CD4-positive, alpha-beta T cell (primary cell): ENCODE measurements at regions of chr6 and their contacts with region 1.

Region 1: DNA sequence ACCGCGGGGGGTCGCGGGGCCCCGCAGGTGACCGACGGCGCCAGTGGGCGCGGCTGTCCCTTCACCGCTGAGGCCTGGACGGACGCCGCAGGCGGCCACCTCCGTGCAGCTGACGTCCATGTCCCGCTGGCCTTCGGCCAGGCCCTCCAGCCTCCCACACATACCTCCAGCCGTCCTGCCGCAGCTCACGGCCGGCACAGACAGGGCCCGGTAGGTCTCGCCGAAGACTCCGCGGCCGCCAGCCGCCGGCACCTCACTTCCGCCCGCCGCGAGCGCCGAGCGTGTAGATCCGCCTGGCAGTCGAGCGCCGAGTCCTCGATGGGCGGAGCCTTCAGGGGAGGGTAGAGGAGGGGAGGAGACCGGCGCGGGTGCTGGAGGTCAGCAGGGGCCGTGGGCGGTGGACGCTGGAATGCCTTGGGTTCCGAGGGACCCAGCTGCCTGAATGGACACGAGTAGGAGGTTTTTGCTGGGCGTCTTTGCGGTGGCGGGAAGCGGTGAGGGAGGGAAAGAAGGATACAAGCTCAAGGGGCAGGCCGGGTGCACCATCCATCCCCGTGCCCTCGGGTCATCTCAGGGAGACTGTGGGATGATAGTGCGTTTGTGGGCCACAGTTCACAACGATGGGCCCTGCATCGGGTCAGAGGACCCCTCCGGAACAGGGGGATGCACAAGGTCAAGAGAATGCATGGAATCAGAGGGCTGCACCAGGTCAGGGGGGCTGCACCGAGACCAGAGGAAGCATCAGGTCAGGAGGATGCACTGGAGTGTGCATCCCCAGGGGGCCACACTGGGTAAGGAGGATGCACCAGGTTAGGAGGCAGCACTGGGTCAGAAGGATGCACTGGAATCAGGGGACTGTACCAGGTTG is at the start of gene EXOC2:
- DNase-seq: peak; percentile 66 to 90 (median 78)
- ATAC-seq: peak; percentile 77
- H3K4me3 ChIP-seq: peak within 1 kb of the TSS; percentile 78
- H3K4me3 Mint-ChIP-seq: peak within 1 kb of the TSS; percentile 97
- H3K27ac ChIP-seq: peak within 1 kb of the TSS; percentile 81 to 87
- H3K27ac Mint-ChIP-seq: peak within 1 kb of the TSS; percentile 96
- H3K4me1 ChIP-seq: peaks cover 29% of the 10 kb centered on the region
- H3K4me1 Mint-ChIP-seq: peaks cover 24% of the 10 kb centered on the region
- H3K27me3 ChIP-seq: no peaks in the 10 kb centered on the region
- H3K27me3 Mint-ChIP-seq: no peaks in the 10 kb centered on the region
- CTCF ChIP-seq: no peak
- total RNA-seq, gene EXOC2: 16.7 to 18.8 TPM

Region 2: DNA sequence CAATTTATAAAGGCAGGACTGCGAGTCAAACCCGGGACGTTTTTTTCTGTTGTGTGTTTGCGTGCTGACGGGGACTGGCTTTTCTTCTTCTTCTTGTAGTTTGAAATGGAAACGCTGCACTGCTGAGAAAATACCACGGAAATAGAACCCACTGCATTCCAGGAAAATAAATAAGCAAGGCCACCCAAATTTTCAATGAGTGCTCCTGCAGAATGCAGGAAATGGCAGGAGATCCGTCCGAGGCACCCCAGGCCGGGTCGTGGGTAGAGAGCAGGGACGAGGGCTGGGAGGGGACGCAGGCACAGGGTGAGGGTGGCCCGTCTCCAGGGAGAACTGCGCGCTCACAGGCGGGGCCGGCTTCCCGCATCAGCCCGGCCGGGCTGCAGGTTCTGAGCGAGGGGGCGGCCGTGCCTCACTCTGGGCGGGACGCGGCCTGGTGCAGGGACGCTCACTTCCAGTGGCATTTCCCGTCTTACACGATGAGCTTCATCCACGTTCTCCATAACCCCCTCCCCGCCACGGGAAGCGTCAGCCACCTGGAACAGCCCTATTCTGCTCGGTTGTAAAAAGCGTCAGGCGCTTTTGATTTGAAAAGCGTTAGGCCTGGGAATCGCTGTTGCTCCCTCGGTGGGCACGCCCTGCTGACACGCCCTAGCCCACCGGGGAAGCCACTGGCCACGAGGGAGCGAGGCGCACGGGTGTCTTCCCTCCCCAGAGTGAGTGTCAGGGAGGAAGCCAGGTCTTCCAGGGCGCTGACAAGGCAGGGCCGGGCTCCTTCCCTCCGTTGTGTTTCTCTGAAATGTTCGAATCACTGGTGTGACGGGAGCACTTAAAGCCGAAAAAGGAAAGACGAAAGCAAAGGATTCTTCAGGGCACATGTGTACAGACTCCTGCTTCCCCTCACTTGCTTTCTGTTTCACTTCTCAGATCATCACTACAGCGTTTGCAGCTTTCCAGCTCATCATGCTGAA is 17.8 kb after region 1 on chr6:
- CTCF ChIA-PET with region 1: no interaction called
- POLR2A ChIA-PET with region 1: interaction called, 27 read pairs
- intact Hi-C with region 1: loop called (anchors 2 kb)
- DNase-seq: peak; percentile 10 to 81 (median 32)
- ATAC-seq: peak; percentile 91
- H3K4me3 ChIP-seq: peak overlapping the region; percentile 75
- H3K4me3 Mint-ChIP-seq: peak overlapping the region; percentile 97
- H3K27ac ChIP-seq: peak overlapping the region; percentile 68 to 88
- H3K27ac Mint-ChIP-seq: peak overlapping the region; percentile 86
- H3K4me1 ChIP-seq: peaks cover 11% of the 10 kb centered on the region
- H3K4me1 Mint-ChIP-seq: peaks cover 20% of the 10 kb centered on the region
- H3K27me3 ChIP-seq: no peaks in the 10 kb centered on the region
- H3K27me3 Mint-ChIP-seq: peaks cover 6% of the 10 kb centered on the region
- CTCF ChIP-seq: no peak

Region 3: GRCh38 chr6:2245094-2245876 is 1552.2 kb after region 1 on chr6 and contains the start of gene GMDS:
- CTCF ChIA-PET with region 1: no interaction called
- POLR2A ChIA-PET with region 1: no interaction called
- intact Hi-C with region 1: loop called in 1 of 2 experiments (anchors 5 kb)
- DNase-seq: peak; percentile 60 to 95 (median 78)
- ATAC-seq: peak; percentile 88
- H3K4me3 ChIP-seq: peak within 1 kb of the TSS; percentile 97
- H3K4me3 Mint-ChIP-seq: peak within 1 kb of the TSS; percentile 94
- H3K27ac ChIP-seq: peak within 1 kb of the TSS; percentile 50 to 88
- H3K27ac Mint-ChIP-seq: peak within 1 kb of the TSS; percentile 96
- H3K4me1 ChIP-seq: peaks cover 29% of the 10 kb centered on the region
- H3K4me1 Mint-ChIP-seq: peaks cover 69% of the 10 kb centered on the region
- H3K27me3 ChIP-seq: no peaks in the 10 kb centered on the region
- H3K27me3 Mint-ChIP-seq: no peaks in the 10 kb centered on the region
- CTCF ChIP-seq: no peak
- total RNA-seq, gene GMDS: 13.9 to 16.4 TPM